ENCODE measurements at regions of chr3 and their contacts with region 1.

Region 1: DNA sequence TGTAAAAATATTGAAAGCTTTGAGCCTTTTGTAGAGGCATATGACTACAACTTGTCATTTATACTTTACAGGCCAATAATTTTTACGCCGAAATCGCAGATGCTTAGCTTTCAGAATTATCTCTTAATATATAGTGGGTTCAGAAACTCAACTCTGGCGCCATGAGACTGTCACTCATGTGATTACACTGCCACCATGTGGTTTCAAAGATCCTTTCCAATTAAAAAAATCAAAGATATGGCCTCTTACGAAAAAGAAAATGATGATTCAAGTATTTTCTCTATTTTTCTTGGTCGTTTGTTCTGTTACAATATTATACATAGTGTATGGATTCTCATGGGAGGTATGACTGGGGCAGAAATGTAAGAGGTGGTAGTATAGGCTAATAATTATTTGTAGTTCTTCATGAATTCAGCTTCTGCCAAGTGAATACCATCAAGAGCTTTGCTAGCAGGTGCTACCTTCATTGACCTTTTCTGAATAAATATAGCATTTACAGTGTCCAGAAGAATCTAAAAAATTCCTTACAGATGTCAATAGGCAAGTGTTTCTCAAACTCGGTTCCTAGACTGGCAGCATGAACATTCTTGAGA is 751.7 kb upstream of the GOLIM4 start:
- DNase-seq: peak; percentile 12
- ATAC-seq: peak; percentile 77
- H3K4me3 ChIP-seq: no peak overlapping the region
- H3K27ac ChIP-seq: no peak overlapping the region
- H3K4me1 ChIP-seq: no peaks in the 10 kb centered on the region
- H3K27me3 ChIP-seq: no peaks in the 10 kb centered on the region
- CTCF ChIP-seq: peak; percentile 41 to 76 (median 46); a peak in 5 of 6 replicates
- EP300 ChIP-seq: no peak
- POLR2A ChIP-seq: no peak
- RAD21 ChIP-seq: peak; percentile 79

Region 2: DNA sequence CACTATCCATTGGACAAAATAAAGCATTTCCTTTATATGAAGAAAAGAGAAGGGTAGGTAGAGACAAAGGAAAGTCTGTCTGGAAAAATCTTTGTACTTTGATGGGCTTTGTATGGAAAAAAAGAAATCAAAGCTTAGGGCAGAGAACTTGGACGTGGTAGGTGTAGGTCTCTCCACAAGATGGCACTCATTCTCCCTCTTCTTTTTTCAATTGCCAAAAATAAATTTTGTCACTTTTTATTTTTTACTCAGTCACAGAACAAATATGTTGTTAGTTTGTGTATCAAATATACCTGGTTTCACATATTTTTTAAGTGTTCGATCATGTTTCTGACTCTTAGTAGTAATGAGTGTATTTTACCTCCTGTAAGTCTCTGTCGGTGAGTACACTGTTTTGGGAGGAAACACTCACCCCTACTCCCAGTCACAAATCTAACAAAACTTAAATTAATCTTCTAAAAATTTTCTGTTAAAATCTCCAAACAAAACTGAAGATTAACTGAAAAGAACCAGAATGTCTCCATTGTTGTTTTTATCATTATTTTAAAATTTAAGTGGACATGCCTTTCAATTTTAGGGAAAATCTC is 335.9 kb before region 1 on chr3:
- CTCF ChIA-PET with region 1: interaction called, 17 read pairs
- POLR2A ChIA-PET with region 1: no interaction called
- RAD21 ChIA-PET with region 1: interaction called, 8 read pairs
- SMC1A ChIA-PET with region 1: interaction called, 17 read pairs
- in situ Hi-C with region 1: loop called (anchors 5 kb)
- intact Hi-C with region 1: loop called (anchors 1 kb)
- DNase-seq: no peak
- ATAC-seq: peak; percentile 50; the same call in 2 of the 3 replicates
- H3K4me3 ChIP-seq: no peak overlapping the region
- H3K27ac ChIP-seq: no peak overlapping the region
- H3K4me1 ChIP-seq: no peaks in the 10 kb centered on the region
- H3K27me3 ChIP-seq: no peaks in the 10 kb centered on the region
- CTCF ChIP-seq: peak; percentile 47 to 58 (median 49)
- EP300 ChIP-seq: no peak
- POLR2A ChIP-seq: no peak
- RAD21 ChIP-seq: peak; percentile 47